A549 (cell line): ENCODE measurements at regions of chr2 and their contacts with region 1.

Region 1: GRCh38 chr2:203814661-203815540 is 52.7 kb upstream of the CTLA4 start:
- DNase-seq: peak; percentile 73 to 76
- ATAC-seq: peak; percentile 91 to 95
- H3K4me3 ChIP-seq: no peak overlapping the region
- H3K27ac ChIP-seq: peak overlapping the region; percentile 7 to 41; a peak in 2 of 6 replicates
- H3K4me1 ChIP-seq: peaks cover 30% of the 10 kb centered on the region
- CTCF ChIP-seq: peak; percentile 87
- EP300 ChIP-seq: no peak
- POLR2A ChIP-seq: no peak
- RAD21 ChIP-seq: peak; percentile 89 to 94

Region 2: GRCh38 chr2:203453858-203454451 is 360.9 kb before region 1 on chr2:
- CTCF ChIA-PET with region 1: interaction called, 13 read pairs
- POLR2A ChIA-PET with region 1: no interaction called
- DNase-seq: peak; percentile 36 to 64
- ATAC-seq: peak; percentile 70 to 87; a peak in 5 of 6 replicates
- H3K4me3 ChIP-seq: no peak overlapping the region
- H3K27ac ChIP-seq: no peak overlapping the region
- H3K4me1 ChIP-seq: peaks cover 20% of the 10 kb centered on the region
- CTCF ChIP-seq: peak; percentile 85
- EP300 ChIP-seq: no peak
- POLR2A ChIP-seq: no peak
- RAD21 ChIP-seq: peak; percentile 84

Region 3: DNA sequence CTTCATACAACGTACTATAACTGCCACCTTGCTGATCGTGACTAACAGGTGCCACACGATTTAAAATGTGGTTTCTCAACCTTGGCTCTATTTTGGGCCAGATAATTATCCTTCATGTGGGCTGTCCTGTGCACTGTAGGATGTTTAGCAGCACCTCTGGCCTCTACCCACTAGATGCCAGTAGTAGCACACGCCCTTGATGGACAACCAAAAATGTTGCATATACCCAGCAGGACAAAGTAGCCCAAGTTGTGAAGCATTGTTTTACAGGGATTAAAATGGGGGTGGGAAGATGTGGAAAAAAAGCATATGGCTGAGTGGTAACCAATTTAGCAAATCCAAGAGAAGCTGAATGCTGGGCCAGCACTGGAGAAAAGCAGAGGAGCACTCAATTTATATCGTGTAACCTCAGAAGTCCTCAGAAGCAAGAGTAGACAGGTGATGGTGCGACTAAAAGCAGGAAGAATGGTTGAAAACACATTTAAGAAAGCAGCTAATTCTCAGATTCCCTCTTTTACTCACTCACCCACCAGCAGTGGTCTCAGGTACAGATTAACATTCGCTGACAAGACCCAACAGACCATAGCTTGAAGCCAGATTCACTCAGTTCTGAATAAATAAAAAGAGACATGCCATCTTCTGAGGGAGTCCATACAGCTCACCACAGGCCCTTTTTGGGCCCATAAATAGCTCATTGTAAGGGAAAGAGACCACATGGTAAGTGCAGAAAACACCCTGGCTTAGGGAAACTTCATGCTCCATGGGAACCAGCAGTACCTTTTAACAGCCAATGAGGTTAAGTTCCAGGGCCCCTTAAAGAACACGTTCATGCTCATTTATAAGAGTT is 330.4 kb before region 1 on chr2:
- CTCF ChIA-PET with region 1: interaction called, 18 read pairs
- POLR2A ChIA-PET with region 1: no interaction called
- DNase-seq: peak in 1 of 2 experiments; percentile 61
- ATAC-seq: peak; percentile 90 to 96; a peak in 5 of 6 replicates
- H3K4me3 ChIP-seq: no peak overlapping the region
- H3K27ac ChIP-seq: no peak overlapping the region
- H3K4me1 ChIP-seq: no peaks in the 10 kb centered on the region
- CTCF ChIP-seq: peak; percentile 68
- EP300 ChIP-seq: no peak
- POLR2A ChIP-seq: no peak
- RAD21 ChIP-seq: peak; percentile 85 to 89

Region 4: GRCh38 chr2:203797712-203798111 is 17.2 kb before region 1 on chr2:
- CTCF ChIA-PET with region 1: interaction called, 10 read pairs
- POLR2A ChIA-PET with region 1: no interaction called
- DNase-seq: no peak
- ATAC-seq: no peak
- H3K4me3 ChIP-seq: no peak overlapping the region
- H3K27ac ChIP-seq: no peak overlapping the region
- H3K4me1 ChIP-seq: no peaks in the 10 kb centered on the region
- CTCF ChIP-seq: no peak
- EP300 ChIP-seq: no peak
- POLR2A ChIP-seq: no peak
- RAD21 ChIP-seq: no peak

Region 5: GRCh38 chr2:203846490-203847105 is 31.7 kb after region 1 on chr2:
- CTCF ChIA-PET with region 1: no interaction called
- POLR2A ChIA-PET with region 1: no interaction called
- DNase-seq: no peak
- ATAC-seq: no peak
- H3K4me3 ChIP-seq: no peak overlapping the region
- H3K27ac ChIP-seq: no peak overlapping the region
- H3K4me1 ChIP-seq: no peaks in the 10 kb centered on the region
- CTCF ChIP-seq: no peak
- EP300 ChIP-seq: no peak
- POLR2A ChIP-seq: no peak
- RAD21 ChIP-seq: no peak

Region 6: GRCh38 chr2:203876328-203876727 is 61.4 kb after region 1 on chr2:
- CTCF ChIA-PET with region 1: no interaction called
- POLR2A ChIA-PET with region 1: no interaction called
- DNase-seq: no peak
- ATAC-seq: no peak
- H3K4me3 ChIP-seq: no peak overlapping the region
- H3K27ac ChIP-seq: no peak overlapping the region
- H3K4me1 ChIP-seq: no peaks in the 10 kb centered on the region
- CTCF ChIP-seq: no peak
- EP300 ChIP-seq: no peak
- POLR2A ChIP-seq: no peak
- RAD21 ChIP-seq: no peak

Region 7: DNA sequence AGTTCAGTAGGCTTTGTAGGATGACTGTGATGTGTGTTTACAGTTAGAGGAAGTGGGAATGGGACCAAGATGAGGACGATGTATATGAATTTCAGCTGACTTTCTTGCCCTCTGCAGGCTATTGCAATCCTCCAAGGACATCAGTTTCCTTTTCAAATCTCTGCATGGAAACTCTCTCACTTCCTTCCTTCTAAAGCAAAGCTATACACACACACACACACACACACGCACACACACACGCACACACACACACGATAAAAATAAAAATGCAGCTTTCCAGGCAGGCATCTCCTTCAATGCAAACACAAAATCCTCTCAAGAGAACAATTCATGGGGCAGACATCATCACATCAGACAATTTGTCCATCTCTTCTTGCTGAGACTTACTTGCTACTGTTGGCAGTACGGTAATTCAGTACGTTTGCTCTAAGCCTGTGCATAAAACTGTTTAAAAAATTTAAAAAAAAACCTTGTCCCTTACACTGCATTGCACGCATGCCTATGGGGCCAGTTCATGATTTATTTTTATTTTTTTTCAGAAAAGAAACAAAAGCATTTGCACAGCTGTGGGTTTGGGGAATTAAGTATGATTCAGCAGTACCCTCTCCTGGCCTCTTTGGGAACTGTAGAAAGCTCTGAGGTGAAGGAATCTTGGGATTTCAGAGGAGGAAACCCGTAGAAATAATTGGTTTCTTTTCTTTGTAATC is 94.5 kb after region 1 on chr2:
- CTCF ChIA-PET with region 1: interaction called, 11 read pairs
- POLR2A ChIA-PET with region 1: no interaction called
- DNase-seq: peak; percentile 30 to 32
- ATAC-seq: peak; percentile 80 to 92; a peak in 5 of 6 replicates
- H3K4me3 ChIP-seq: no peak overlapping the region
- H3K27ac ChIP-seq: no peak overlapping the region
- H3K4me1 ChIP-seq: 0 out of 3 replicates have a peak, but pooled peaks cover 3% of the 10 kb centered on the region
- CTCF ChIP-seq: peak; percentile 70
- EP300 ChIP-seq: no peak
- POLR2A ChIP-seq: no peak
- RAD21 ChIP-seq: peak; percentile 70 to 75

Region 8: GRCh38 chr2:204012072-204012653 is 197.3 kb after region 1 on chr2:
- CTCF ChIA-PET with region 1: no interaction called
- POLR2A ChIA-PET with region 1: no interaction called
- DNase-seq: no peak
- ATAC-seq: no peak
- H3K4me3 ChIP-seq: no peak overlapping the region
- H3K27ac ChIP-seq: no peak overlapping the region
- H3K4me1 ChIP-seq: no peaks in the 10 kb centered on the region
- CTCF ChIP-seq: no peak
- EP300 ChIP-seq: no peak
- POLR2A ChIP-seq: no peak
- RAD21 ChIP-seq: no peak